Naive thymus-derived CD4-positive, alpha-beta T cell (primary cell): ENCODE measurements at regions of chr6 and their contacts with region 1.

Region 1: DNA sequence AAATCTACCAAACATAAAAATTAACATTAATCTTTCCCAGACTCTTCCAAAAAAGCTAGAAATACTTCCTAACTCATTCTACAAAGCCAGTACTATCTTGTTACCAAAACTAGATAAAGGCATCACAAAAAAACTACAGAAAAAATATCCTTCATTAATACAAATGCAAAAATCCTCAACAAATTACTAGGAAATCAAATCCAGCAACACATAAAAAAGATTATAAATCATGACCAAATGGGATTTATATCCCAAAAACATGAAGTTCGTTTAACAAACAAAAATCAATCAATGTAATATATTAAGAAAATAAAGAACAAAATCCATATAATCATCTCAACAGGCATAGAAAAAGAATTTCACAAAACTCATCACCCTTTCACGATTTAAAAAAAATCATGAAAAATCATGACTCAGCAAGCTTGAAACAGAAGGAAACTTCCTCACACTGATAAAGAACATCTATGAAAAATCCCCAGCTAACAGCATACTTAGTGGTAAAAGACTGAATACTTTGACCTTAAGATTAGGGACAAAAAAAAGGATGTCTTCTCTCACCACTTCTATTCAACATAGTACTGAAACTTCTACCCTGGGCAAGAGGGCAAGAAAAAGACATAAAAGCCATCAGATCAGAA is 43.2 kb downstream of the RANBP9 start:
- DNase-seq: no peak
- ATAC-seq: peak; percentile 47
- H3K4me3 ChIP-seq: no peak overlapping the region
- H3K4me3 Mint-ChIP-seq: peak overlapping the region in 7 of 10 donors; percentile 32 to 52 (median 40)
- H3K27ac ChIP-seq: no peak overlapping the region
- H3K27ac Mint-ChIP-seq: peak overlapping the region in 2 of 9 donors; percentile 20 to 75
- H3K4me1 ChIP-seq: peaks cover 23 to 44% of the 10 kb centered on the region in 2 donors
- H3K4me1 Mint-ChIP-seq: peaks cover 67 to 93% (median 90%) of the 10 kb centered on the region in 7 donors
- H3K27me3 ChIP-seq: no peaks in the 10 kb centered on the region
- H3K27me3 Mint-ChIP-seq: no peaks in the 10 kb centered on the region

Region 2: GRCh38 chr6:13648851-13649250 is 19.6 kb before region 1 on chr6:
- CTCF ChIA-PET with region 1: no interaction called
- POLR2A ChIA-PET with region 1: interaction called, 3 read pairs
- intact Hi-C with region 1: loop called (anchors 2 kb)
- DNase-seq: no peak
- ATAC-seq: no peak
- H3K4me3 ChIP-seq: no peak overlapping the region
- H3K4me3 Mint-ChIP-seq: no peak overlapping the region
- H3K27ac ChIP-seq: no peak overlapping the region
- H3K27ac Mint-ChIP-seq: peak overlapping the region in 4 of 9 donors; percentile 9 to 53 (median 17)
- H3K4me1 ChIP-seq: peaks cover 0 to 4% of the 10 kb centered on the region in 2 donors
- H3K4me1 Mint-ChIP-seq: peaks cover 5 to 29% (median 19%) of the 10 kb centered on the region in 7 donors
- H3K27me3 ChIP-seq: no peaks in the 10 kb centered on the region
- H3K27me3 Mint-ChIP-seq: no peaks in the 10 kb centered on the region

Region 3: DNA sequence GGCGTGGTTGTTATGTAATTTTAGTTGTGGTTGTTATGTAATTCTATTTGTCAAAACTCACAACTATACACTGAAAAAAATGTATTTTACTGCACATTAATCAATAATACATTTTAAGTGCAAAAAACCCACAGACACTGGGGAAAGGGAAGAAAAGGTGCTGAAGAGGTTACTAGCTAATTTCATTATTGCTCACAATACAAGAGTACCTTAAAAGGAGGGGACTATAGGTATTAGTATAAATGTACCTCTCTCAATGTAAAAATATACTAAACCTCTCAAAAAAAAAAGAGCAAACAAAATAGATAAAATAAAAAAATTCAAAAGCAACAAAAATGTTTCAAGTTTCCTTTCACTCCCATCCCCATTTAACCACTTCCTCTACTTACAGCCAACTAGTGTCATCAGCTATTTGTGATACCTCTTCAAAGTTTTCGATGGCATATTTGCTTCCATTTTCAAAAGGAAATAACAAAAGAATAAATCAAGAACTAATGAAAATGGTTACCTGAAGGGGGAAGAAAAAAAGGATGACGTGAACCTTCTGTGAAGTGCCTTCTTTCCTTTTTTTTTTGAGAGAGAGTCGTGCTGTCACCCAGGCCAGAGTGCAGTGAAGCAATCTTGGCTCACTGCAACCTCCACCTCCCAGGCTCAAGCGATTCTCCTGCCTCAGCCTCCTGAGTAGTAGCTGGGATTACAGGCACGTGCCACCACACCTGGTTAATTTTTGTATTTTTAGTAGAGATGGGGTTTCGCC is 13.1 kb after region 1 on chr6:
- CTCF ChIA-PET with region 1: no interaction called
- POLR2A ChIA-PET with region 1: interaction called, 5 read pairs
- intact Hi-C with region 1: loop called in 1 of 2 experiments (anchors 1 kb)
- DNase-seq: peak in 7 of 9 donors; percentile 41 to 78 (median 65)
- ATAC-seq: peak; percentile 82
- H3K4me3 ChIP-seq: peak overlapping the region; percentile 4
- H3K4me3 Mint-ChIP-seq: peak overlapping the region; percentile 38 to 75 (median 58)
- H3K27ac ChIP-seq: peak overlapping the region; percentile 54
- H3K27ac Mint-ChIP-seq: peak overlapping the region; percentile 63 to 92 (median 86)
- H3K4me1 ChIP-seq: peaks cover 36 to 42% of the 10 kb centered on the region in 2 donors
- H3K4me1 Mint-ChIP-seq: peaks cover 34 to 74% (median 65%) of the 10 kb centered on the region in 7 donors
- H3K27me3 ChIP-seq: no peaks in the 10 kb centered on the region
- H3K27me3 Mint-ChIP-seq: no peaks in the 10 kb centered on the region

Region 4: DNA sequence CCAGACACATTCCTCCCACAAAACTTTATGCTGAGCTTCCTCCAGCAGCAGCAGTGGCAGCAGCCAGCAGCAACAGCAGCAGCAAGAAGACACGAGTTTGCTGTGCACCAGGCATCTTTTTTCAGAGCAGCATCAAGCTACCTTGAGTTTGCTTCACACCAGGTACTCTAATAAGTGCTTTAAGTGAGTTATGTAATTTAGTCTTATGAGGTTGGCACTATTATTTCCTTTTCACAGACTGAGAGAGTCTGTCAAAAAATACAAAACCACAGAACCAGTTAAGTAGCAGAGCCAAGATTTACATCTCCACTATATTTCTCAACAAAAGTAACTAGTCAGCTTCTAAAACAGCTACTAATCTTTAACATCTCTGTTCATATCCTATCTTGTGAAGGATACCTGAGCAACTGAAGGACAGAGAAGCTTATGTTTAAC is 19.5 kb after region 1 on chr6:
- CTCF ChIA-PET with region 1: no interaction called
- POLR2A ChIA-PET with region 1: interaction called, 3 read pairs
- intact Hi-C with region 1: loop called in 1 of 2 experiments (anchors 2 kb)
- DNase-seq: peak in 7 of 9 donors; percentile 37 to 76 (median 64)
- ATAC-seq: peak; percentile 87
- H3K4me3 ChIP-seq: peak overlapping the region; percentile 13
- H3K4me3 Mint-ChIP-seq: peak overlapping the region; percentile 33 to 83 (median 70)
- H3K27ac ChIP-seq: peak overlapping the region; percentile 66
- H3K27ac Mint-ChIP-seq: peak overlapping the region; percentile 53 to 97 (median 94)
- H3K4me1 ChIP-seq: peaks cover 43 to 54% of the 10 kb centered on the region in 2 donors
- H3K4me1 Mint-ChIP-seq: peaks cover 40 to 73% (median 65%) of the 10 kb centered on the region in 7 donors
- H3K27me3 ChIP-seq: no peaks in the 10 kb centered on the region
- H3K27me3 Mint-ChIP-seq: no peaks in the 10 kb centered on the region

Region 5: GRCh38 chr6:13696226-13696625 is 27.8 kb after region 1 on chr6:
- CTCF ChIA-PET with region 1: no interaction called
- POLR2A ChIA-PET with region 1: no interaction called
- intact Hi-C with region 1: loop called in 1 of 2 experiments (anchors 5 kb)
- DNase-seq: no peak
- ATAC-seq: no peak
- H3K4me3 ChIP-seq: no peak overlapping the region
- H3K4me3 Mint-ChIP-seq: peak overlapping the region in 4 of 10 donors; percentile 28 to 66 (median 39)
- H3K27ac ChIP-seq: peak overlapping the region; percentile 60
- H3K27ac Mint-ChIP-seq: peak overlapping the region in 7 of 9 donors; percentile 56 to 92 (median 83)
- H3K4me1 ChIP-seq: peaks cover 31 to 42% of the 10 kb centered on the region in 2 donors
- H3K4me1 Mint-ChIP-seq: peaks cover 42 to 82% (median 73%) of the 10 kb centered on the region in 7 donors
- H3K27me3 ChIP-seq: no peaks in the 10 kb centered on the region
- H3K27me3 Mint-ChIP-seq: no peaks in the 10 kb centered on the region